H1 (cell line): ENCODE measurements at regions of chr3 and their contacts with region 1.

Region 1: GRCh38 chr3:171646357-171647133 is 163.7 kb downstream of the PLD1 start:
- DNase-seq: no peak
- H3K4me3 ChIP-seq: no peak overlapping the region
- H3K27ac ChIP-seq: no peak overlapping the region
- H3K4me1 ChIP-seq: no peaks in the 10 kb centered on the region
- H3K27me3 ChIP-seq: no peaks in the 10 kb centered on the region
- CTCF ChIP-seq: peak in 2 of 3 experiments; percentile 36 to 54; a peak in 2 of 4 replicates
- EP300 ChIP-seq: no peak
- POLR2A ChIP-seq: no peak
- RAD21 ChIP-seq: peak; percentile 62 to 66

Region 2: GRCh38 chr3:171516765-171517164 is 129.8 kb before region 1 on chr3:
- CTCF ChIA-PET with region 1: no interaction called
- POLR2A ChIA-PET with region 1: no interaction called
- DNase-seq: no peak
- H3K4me3 ChIP-seq: no peak overlapping the region
- H3K27ac ChIP-seq: no peak overlapping the region
- H3K4me1 ChIP-seq: no peaks in the 10 kb centered on the region
- H3K27me3 ChIP-seq: no peaks in the 10 kb centered on the region
- CTCF ChIP-seq: no peak
- EP300 ChIP-seq: no peak
- POLR2A ChIP-seq: no peak
- RAD21 ChIP-seq: no peak

Region 3: DNA sequence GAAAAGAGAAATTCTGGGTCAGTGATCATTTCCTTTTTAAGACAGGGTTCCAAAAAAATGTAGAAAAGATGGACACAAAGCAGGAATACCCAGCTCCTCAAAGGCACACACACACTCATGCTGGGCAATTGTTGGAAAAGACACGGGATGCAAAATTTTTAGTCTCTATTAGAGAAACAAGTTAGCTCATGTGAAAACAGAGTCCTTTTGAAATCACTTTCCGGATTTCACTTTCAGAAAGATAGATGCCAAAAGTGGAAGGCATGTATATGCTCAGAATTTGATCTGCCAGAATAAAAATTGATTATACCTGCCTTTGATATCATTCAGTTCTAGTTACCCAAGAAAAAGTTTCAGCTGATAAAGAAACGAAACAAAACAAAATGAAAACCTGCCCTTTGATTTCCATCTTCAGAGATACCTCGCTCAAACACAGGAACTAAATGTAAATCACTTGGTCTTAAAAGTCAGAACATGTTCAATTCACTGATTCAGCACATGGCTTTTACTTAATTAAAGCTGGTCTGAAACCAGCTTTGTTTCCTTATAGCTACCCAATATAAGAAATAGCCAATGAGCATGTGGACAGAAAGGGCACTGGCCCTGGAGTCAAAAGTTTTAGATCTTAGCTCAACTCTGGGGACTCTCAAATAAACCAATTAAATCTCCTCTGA is 111.0 kb after region 1 on chr3:
- CTCF ChIA-PET with region 1: interaction called, 14 read pairs
- POLR2A ChIA-PET with region 1: no interaction called
- DNase-seq: no peak
- H3K4me3 ChIP-seq: no peak overlapping the region
- H3K27ac ChIP-seq: no peak overlapping the region
- H3K4me1 ChIP-seq: no peaks in the 10 kb centered on the region
- H3K27me3 ChIP-seq: no peaks in the 10 kb centered on the region
- CTCF ChIP-seq: no peak
- EP300 ChIP-seq: no peak
- POLR2A ChIP-seq: no peak
- RAD21 ChIP-seq: no peak